AG04450 (cell line): ENCODE measurements at regions of chr11 and their contacts with region 1.

Region 1: DNA sequence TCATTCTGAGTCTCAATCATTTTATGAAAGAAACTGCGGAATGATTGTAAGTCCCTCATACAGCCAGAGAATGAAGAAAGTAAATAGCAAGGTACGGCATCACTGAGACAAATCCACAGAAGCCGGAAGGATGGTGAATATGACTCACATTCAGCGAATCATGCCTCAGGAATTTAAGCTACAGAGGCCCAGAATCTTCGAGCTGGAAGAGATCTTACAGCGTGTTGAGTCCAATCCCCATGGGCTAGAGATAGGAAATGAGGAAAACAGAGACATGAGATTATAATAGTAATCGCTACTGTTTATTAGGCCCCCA is 173.2 kb downstream of the KIF18A start:
- DNase-seq: peak; percentile 90
- H3K4me3 ChIP-seq: peak overlapping the region; percentile 11; the same call in 1 of the 2 replicates
- H3K27ac ChIP-seq: peak overlapping the region; percentile 100
- H3K27me3 ChIP-seq: no peaks in the 10 kb centered on the region
- CTCF ChIP-seq: no peak

Region 2: GRCh38 chr11:27812341-27812740 is 122.4 kb before region 1 on chr11:
- CTCF ChIA-PET with region 1: no interaction called
- POLR2A ChIA-PET with region 1: no interaction called
- DNase-seq: no peak
- H3K4me3 ChIP-seq: no peak overlapping the region
- H3K27ac ChIP-seq: no peak overlapping the region
- H3K27me3 ChIP-seq: no peaks in the 10 kb centered on the region
- CTCF ChIP-seq: no peak

Region 3: GRCh38 chr11:27921472-27921871 is 13.3 kb before region 1 on chr11:
- CTCF ChIA-PET with region 1: no interaction called
- POLR2A ChIA-PET with region 1: no interaction called
- DNase-seq: no peak
- H3K4me3 ChIP-seq: no peak overlapping the region
- H3K27ac ChIP-seq: no peak overlapping the region
- H3K27me3 ChIP-seq: no peaks in the 10 kb centered on the region
- CTCF ChIP-seq: no peak

Region 4: DNA sequence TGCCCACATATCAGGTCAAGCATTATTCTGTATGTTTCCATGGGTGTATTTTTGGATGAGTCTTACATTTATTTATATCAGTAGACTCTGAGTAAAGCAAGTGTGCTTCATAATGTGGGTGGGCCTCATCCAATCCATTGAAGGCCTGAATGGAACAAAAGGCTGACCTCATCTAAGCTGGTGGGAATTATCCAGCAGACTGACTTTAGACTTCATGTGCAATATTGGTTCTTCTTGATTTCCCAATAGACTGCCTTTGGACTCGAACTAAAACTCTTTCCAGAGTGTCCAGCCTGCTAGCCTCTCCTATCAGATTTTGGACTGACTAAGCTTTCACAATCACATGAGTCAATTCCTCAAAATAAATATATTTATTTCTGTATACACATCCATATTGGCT is 56.9 kb after region 1 on chr11:
- CTCF ChIA-PET with region 1: no interaction called
- POLR2A ChIA-PET with region 1: interaction called, 14 read pairs
- DNase-seq: peak; percentile 11
- H3K4me3 ChIP-seq: no peak overlapping the region
- H3K27ac ChIP-seq: no peak overlapping the region
- H3K27me3 ChIP-seq: no peaks in the 10 kb centered on the region
- CTCF ChIP-seq: no peak

Region 5: GRCh38 chr11:28384418-28384817 is 449.6 kb after region 1 on chr11:
- CTCF ChIA-PET with region 1: no interaction called
- POLR2A ChIA-PET with region 1: no interaction called
- DNase-seq: peak; percentile 76
- H3K4me3 ChIP-seq: no peak overlapping the region
- H3K27ac ChIP-seq: no peak overlapping the region
- H3K27me3 ChIP-seq: no peaks in the 10 kb centered on the region
- CTCF ChIP-seq: no peak